ENCODE measurements at regions of chr2 and their contacts with region 1.

Region 1: GRCh38 chr2:166180951-166181812 is 53.4 kb upstream of the SCN1A start:
- DNase-seq: peak; percentile 43
- H3K4me3 ChIP-seq: no peak overlapping the region
- H3K27ac ChIP-seq: no peak overlapping the region
- H3K4me1 ChIP-seq: peaks cover 13% of the 10 kb centered on the region
- H3K27me3 ChIP-seq: no peaks in the 10 kb centered on the region
- CTCF ChIP-seq: peak; percentile 50 to 76

Region 2: DNA sequence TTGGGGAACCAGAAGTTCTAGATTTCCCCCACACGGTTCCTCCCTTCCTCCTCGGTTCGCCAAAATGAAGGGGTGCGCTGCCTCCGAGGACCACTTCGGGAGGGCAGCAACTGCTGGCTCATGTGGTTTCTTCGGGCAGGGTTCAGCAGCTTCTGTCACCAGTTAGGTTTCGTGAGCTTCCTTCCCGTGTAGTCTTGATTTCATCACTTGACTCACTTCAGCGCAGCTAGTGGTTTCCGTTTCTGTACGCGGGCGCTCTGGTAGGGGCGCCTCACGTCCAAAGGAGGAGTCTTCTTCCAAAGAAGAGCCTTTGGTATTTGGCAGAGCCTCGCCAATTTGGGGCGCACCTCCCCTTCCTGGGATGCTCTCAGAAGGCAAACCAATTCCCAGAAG is 386.6 kb before region 1 on chr2:
- CTCF ChIA-PET with region 1: no interaction called
- dilution Hi-C with region 1: no loop called
- in situ Hi-C with region 1: no loop called
- intact Hi-C with region 1: loop called (anchors 5 kb)
- DNase-seq: peak; percentile 87
- H3K4me3 ChIP-seq: peak overlapping the region; percentile 74 to 96 (median 80)
- H3K27ac ChIP-seq: peak overlapping the region; percentile 96
- H3K4me1 ChIP-seq: peaks cover 15% of the 10 kb centered on the region
- H3K27me3 ChIP-seq: no peaks in the 10 kb centered on the region
- CTCF ChIP-seq: no peak

Region 3: GRCh38 chr2:166011660-166012059 is 169.5 kb before region 1 on chr2:
- CTCF ChIA-PET with region 1: no interaction called
- dilution Hi-C with region 1: no loop called
- in situ Hi-C with region 1: no loop called
- intact Hi-C with region 1: no loop called
- DNase-seq: no peak
- H3K4me3 ChIP-seq: no peak overlapping the region
- H3K27ac ChIP-seq: no peak overlapping the region
- H3K4me1 ChIP-seq: no peaks in the 10 kb centered on the region
- H3K27me3 ChIP-seq: peaks cover 2% of the 10 kb centered on the region
- CTCF ChIP-seq: no peak

Region 4: DNA sequence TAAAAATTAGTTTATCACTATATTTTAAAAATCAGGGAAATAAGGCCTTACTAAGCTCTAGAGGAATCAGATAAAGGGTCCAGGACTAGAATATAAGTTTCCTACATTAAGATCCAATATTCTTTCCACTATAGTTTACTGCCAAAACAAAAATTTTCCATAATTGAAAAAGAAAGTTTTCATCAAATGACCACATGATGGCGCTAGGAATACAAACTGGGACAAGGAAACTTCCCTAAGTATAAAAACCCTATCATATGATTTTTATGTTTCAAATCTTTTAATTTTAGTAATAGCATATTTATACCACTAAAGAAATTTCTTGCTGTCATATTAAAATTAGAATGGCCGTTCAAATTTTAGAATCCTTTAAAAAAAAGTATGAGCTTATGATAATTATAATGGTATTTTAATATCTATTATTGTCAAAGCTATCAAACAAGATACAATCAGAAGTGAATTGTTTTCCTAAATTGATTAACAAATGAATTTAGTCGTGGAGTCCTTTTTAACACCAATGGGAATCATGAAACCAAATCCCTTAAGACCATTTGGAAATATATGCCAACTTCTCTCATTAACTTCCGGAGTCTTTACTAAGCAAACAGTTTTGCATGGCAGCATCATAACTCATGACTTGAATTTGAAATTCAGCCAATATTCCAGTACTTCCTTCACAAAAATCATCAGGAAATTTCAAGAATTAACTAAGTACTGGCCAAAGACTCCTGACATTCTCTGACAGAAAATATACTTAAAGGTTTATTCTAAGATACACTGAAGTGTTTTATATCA is 123.6 kb before region 1 on chr2:
- CTCF ChIA-PET with region 1: no interaction called
- dilution Hi-C with region 1: no loop called
- in situ Hi-C with region 1: no loop called
- intact Hi-C with region 1: loop called (anchors 1 kb)
- DNase-seq: no peak
- H3K4me3 ChIP-seq: no peak overlapping the region
- H3K27ac ChIP-seq: no peak overlapping the region
- H3K4me1 ChIP-seq: no peaks in the 10 kb centered on the region
- H3K27me3 ChIP-seq: peaks cover 2% of the 10 kb centered on the region
- CTCF ChIP-seq: peak; percentile 45 to 55

Region 5: DNA sequence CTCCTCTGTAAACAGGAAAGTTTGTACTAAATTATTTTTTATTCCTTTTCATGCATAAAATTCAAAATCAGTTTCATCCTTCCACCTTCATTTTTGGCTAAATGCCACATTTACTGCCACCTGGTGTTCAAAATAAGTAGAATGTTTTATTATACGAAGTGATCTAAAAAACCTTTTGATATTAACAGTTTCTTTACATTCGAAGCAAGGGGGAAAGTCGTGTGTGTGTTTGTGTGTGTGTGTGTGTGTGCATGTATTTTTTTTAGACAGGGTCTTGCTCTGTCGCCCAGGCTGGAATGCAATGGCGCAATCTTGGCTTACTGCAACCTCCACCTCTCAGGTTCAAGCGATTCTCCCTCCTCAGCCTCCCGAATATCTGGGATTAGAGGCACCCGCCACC is 203.6 kb after region 1 on chr2:
- CTCF ChIA-PET with region 1: no interaction called
- dilution Hi-C with region 1: no loop called
- in situ Hi-C with region 1: no loop called
- intact Hi-C with region 1: loop called (anchors 2 kb)
- DNase-seq: peak; percentile 11
- H3K4me3 ChIP-seq: no peak overlapping the region
- H3K27ac ChIP-seq: no peak overlapping the region
- H3K4me1 ChIP-seq: no peaks in the 10 kb centered on the region
- H3K27me3 ChIP-seq: no peaks in the 10 kb centered on the region
- CTCF ChIP-seq: peak; percentile 36 to 48

Region 6: GRCh38 chr2:166410828-166411472 is 229.8 kb after region 1 on chr2:
- CTCF ChIA-PET with region 1: no interaction called
- dilution Hi-C with region 1: no loop called
- in situ Hi-C with region 1: loop called (anchors 5 to 10 kb)
- intact Hi-C with region 1: loop called (anchors 2 kb)
- DNase-seq: peak; percentile 84
- H3K4me3 ChIP-seq: no peak overlapping the region
- H3K27ac ChIP-seq: peak overlapping the region; percentile 91
- H3K4me1 ChIP-seq: peaks cover 26% of the 10 kb centered on the region
- H3K27me3 ChIP-seq: no peaks in the 10 kb centered on the region
- CTCF ChIP-seq: no peak